PC-3 (cell line): ENCODE measurements at regions of chr2 and their contacts with region 1.

Region 1: GRCh38 chr2:58562276-58562675 is 321.2 kb upstream of the FANCL start:
- DNase-seq: peak; percentile 26
- ATAC-seq: peak; percentile 66
- H3K4me3 ChIP-seq: no peak overlapping the region
- H3K27ac ChIP-seq: no peak overlapping the region
- H3K4me1 ChIP-seq: peaks cover 6% of the 10 kb centered on the region
- H3K27me3 ChIP-seq: no peaks in the 10 kb centered on the region
- CTCF ChIP-seq: no peak

Region 2: GRCh38 chr2:58521803-58522554 is 40.3 kb before region 1 on chr2:
- CTCF ChIA-PET with region 1: no interaction called
- POLR2A ChIA-PET with region 1: no interaction called
- intact Hi-C with region 1: loop called (anchors 5 kb)
- DNase-seq: peak; percentile 56
- ATAC-seq: peak; percentile 51
- H3K4me3 ChIP-seq: no peak overlapping the region
- H3K27ac ChIP-seq: no peak overlapping the region
- H3K4me1 ChIP-seq: peaks cover 16% of the 10 kb centered on the region
- H3K27me3 ChIP-seq: no peaks in the 10 kb centered on the region
- CTCF ChIP-seq: no peak

Region 3: GRCh38 chr2:58539973-58540372 is 22.3 kb before region 1 on chr2:
- CTCF ChIA-PET with region 1: no interaction called
- POLR2A ChIA-PET with region 1: no interaction called
- intact Hi-C with region 1: no loop called
- DNase-seq: peak; percentile 15
- ATAC-seq: peak; percentile 83
- H3K4me3 ChIP-seq: no peak overlapping the region
- H3K27ac ChIP-seq: no peak overlapping the region
- H3K4me1 ChIP-seq: peaks cover 7% of the 10 kb centered on the region; the same call in 1 of the 2 replicates
- H3K27me3 ChIP-seq: no peaks in the 10 kb centered on the region
- CTCF ChIP-seq: no peak